Body of pancreas (tissue), 4 donors: ENCODE measurements at regions of chr2 and their contacts with region 1.

Region 1: GRCh38 chr2:121722479-121722878 is 14.2 kb downstream of the NIFK start:
- DNase-seq: no peak
- ATAC-seq: no peak
- H3K4me3 ChIP-seq: no peak overlapping the region
- H3K27ac ChIP-seq: peak overlapping the region in 1 of 4 donors; percentile 61
- H3K4me1 ChIP-seq: peaks cover 7% of the 10 kb centered on the region
- H3K27me3 ChIP-seq: no peaks in the 10 kb centered on the region
- CTCF ChIP-seq: no peak
- POLR2A ChIP-seq: no peak

Region 2: DNA sequence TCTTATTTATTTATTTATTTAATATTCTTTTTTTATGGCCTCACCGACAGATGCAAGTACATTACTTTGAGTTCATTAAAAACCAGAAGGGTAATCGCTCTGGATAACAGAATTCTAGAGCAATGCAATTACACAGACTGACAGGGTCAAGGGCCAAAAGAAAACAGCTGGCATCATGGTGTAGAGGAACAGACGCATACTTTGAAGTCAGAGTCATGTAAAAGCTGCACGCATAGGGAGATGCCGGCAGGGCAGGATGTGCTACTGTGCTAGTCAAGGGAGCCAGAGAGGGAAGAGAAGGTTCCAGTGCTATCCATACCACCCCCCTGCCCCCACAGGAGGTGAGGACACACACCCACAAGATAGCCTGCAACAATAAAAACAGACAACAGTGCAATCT is 322.3 kb before region 1 on chr2:
- intact Hi-C with region 1: loop called (anchors 10 kb)
- DNase-seq: no peak
- ATAC-seq: no peak
- H3K4me3 ChIP-seq: no peak overlapping the region
- H3K27ac ChIP-seq: no peak overlapping the region
- H3K4me1 ChIP-seq: no peaks in the 10 kb centered on the region
- H3K27me3 ChIP-seq: no peaks in the 10 kb centered on the region
- CTCF ChIP-seq: no peak
- POLR2A ChIP-seq: no peak

Region 3: GRCh38 chr2:121529439-121530211 is 192.9 kb before region 1 on chr2:
- intact Hi-C with region 1: loop called (anchors 10 kb)
- DNase-seq: peak; percentile 58 to 75 (median 66)
- ATAC-seq: peak; percentile 24
- H3K4me3 ChIP-seq: peak overlapping the region; percentile 54 to 79
- H3K27ac ChIP-seq: peak overlapping the region; percentile 97 to 99 (median 98)
- H3K4me1 ChIP-seq: peaks cover 44% of the 10 kb centered on the region
- H3K27me3 ChIP-seq: no peaks in the 10 kb centered on the region
- CTCF ChIP-seq: no peak
- POLR2A ChIP-seq: no peak